Motor neuron (in vitro differentiated cells): ENCODE measurements at regions of chr4 and their contacts with region 1.

Region 1: DNA sequence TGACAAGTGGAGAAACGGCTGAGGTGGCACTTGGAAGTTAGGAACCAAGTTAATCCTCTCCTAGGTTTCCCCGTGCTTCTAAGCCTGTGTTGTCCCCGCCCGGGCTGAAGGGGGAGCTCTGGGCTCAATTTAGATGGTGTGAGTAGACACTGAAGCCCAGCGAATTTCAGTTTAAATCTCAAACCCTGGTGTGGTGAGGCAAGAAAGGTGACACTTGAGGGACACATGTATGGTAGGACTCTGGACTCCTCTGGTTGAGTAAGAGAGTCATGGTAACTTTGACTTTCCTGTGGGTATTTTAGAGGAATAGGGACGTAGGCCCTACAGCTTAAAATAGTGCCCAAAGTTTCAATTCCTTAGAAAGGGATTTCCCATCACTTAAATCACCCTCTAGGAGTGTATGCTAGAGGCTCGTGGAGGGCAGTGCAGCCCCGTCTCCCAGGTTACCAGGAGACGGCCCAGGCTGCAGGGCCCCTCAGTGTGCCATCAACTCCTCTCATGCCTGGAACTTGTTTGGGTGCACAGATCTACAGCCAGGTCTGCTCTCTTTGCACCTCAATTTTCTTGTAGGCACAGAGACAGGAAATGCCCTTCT is 24.0 kb downstream of the HAND2 start:
- ATAC-seq: peak in 3 of 8 experiments; percentile 42 to 91 (median 57)
- H3K4me3 ChIP-seq: no peak overlapping the region
- H3K27ac ChIP-seq: no peak overlapping the region
- H3K4me1 ChIP-seq: peaks cover 0 to 2% of the 10 kb centered on the region in 2 donors

Region 2: GRCh38 chr4:173346074-173346473 is 159.9 kb before region 1 on chr4:
- in situ Hi-C with region 1: no loop called
- ATAC-seq: no peak
- H3K4me3 ChIP-seq: no peak overlapping the region
- H3K27ac ChIP-seq: no peak overlapping the region
- H3K4me1 ChIP-seq: no peaks in the 10 kb centered on the region

Region 3: GRCh38 chr4:173386751-173387150 is 119.3 kb before region 1 on chr4:
- in situ Hi-C with region 1: no loop called
- ATAC-seq: no peak
- H3K4me3 ChIP-seq: no peak overlapping the region
- H3K27ac ChIP-seq: no peak overlapping the region
- H3K4me1 ChIP-seq: no peaks in the 10 kb centered on the region

Region 4: GRCh38 chr4:173748353-173748752 is 242.3 kb after region 1 on chr4:
- in situ Hi-C with region 1: loop called in 3 of 9 experiments (anchors 10 to 25 kb)
- ATAC-seq: peak in 1 of 8 experiments; percentile 44
- H3K4me3 ChIP-seq: no peak overlapping the region
- H3K27ac ChIP-seq: no peak overlapping the region
- H3K4me1 ChIP-seq: peaks cover 0 to 4% of the 10 kb centered on the region in 2 donors

Region 5: GRCh38 chr4:174005422-174005821 is 499.4 kb after region 1 on chr4:
- in situ Hi-C with region 1: loop called in 1 of 9 experiments (anchors 25 kb)
- ATAC-seq: peak in 7 of 8 experiments; percentile 46 to 91 (median 64)
- H3K4me3 ChIP-seq: no peak overlapping the region
- H3K27ac ChIP-seq: no peak overlapping the region
- H3K4me1 ChIP-seq: peaks cover 0 to 3% of the 10 kb centered on the region in 2 donors

Region 6: GRCh38 chr4:174156239-174156826 is 650.3 kb after region 1 on chr4:
- in situ Hi-C with region 1: loop called in 2 of 9 experiments (anchors 25 kb)
- ATAC-seq: peak; percentile 46 to 81 (median 56)
- H3K4me3 ChIP-seq: no peak overlapping the region
- H3K27ac ChIP-seq: no peak overlapping the region
- H3K4me1 ChIP-seq: peaks cover 0 to 4% of the 10 kb centered on the region in 2 donors

Region 7: DNA sequence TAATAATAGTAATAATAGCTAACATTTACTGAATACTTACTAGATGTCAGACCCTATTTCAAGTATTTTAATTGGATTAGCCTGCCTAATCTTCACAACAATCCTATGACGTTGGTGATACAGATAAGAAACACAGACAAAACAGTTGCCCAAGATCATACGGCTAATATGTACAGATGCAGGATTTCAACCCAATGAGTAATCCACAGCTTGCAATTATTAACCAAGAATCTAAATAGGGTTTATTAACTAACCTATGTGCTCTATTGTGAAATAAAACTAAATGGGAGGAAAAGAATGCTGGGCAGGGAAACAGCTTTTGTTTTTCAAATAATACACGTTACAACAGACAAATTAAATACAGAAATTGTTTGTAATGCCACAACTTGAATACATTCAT is 754.1 kb after region 1 on chr4:
- in situ Hi-C with region 1: no loop called
- ATAC-seq: peak in 2 of 8 experiments; percentile 22 to 28
- H3K4me3 ChIP-seq: no peak overlapping the region
- H3K27ac ChIP-seq: no peak overlapping the region
- H3K4me1 ChIP-seq: no peaks in the 10 kb centered on the region